Breast epithelium (tissue), 4 donors: ENCODE measurements at regions of chr2 and their contacts with region 1.

Region 1: GRCh38 chr2:50786345-50786744 is 245.6 kb downstream of the NRXN1 start:
- DNase-seq: no peak
- H3K4me3 ChIP-seq: no peak overlapping the region
- H3K27ac ChIP-seq: no peak overlapping the region
- H3K4me1 ChIP-seq: no peaks in the 10 kb centered on the region
- H3K27me3 ChIP-seq: no peaks in the 10 kb centered on the region
- CTCF ChIP-seq: no peak
- POLR2A ChIP-seq: no peak

Region 2: DNA sequence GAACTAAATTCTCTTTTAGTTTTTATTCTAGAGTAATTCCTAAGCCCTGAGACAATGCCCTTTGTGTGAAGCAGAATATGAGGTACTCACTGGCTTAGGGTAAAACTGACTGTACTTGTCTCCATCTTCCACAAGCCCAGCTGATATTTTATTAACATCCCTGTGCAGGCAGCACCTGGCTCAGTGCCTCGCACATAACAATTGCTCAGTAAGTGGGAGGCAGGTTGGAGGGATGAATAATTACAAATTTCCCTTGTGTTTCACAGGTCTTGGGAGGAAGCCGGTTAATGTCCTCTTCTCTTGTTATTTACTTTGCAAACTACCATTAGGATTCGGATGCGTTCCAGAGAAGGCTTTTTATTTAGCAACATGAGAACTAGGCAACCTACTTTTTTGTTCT is 1382.2 kb before region 1 on chr2:
- intact Hi-C with region 1: loop called (anchors 10 kb)
- DNase-seq: no peak
- H3K4me3 ChIP-seq: no peak overlapping the region
- H3K27ac ChIP-seq: no peak overlapping the region
- H3K4me1 ChIP-seq: no peaks in the 10 kb centered on the region
- H3K27me3 ChIP-seq: no peaks in the 10 kb centered on the region
- CTCF ChIP-seq: no peak
- POLR2A ChIP-seq: no peak

Region 3: DNA sequence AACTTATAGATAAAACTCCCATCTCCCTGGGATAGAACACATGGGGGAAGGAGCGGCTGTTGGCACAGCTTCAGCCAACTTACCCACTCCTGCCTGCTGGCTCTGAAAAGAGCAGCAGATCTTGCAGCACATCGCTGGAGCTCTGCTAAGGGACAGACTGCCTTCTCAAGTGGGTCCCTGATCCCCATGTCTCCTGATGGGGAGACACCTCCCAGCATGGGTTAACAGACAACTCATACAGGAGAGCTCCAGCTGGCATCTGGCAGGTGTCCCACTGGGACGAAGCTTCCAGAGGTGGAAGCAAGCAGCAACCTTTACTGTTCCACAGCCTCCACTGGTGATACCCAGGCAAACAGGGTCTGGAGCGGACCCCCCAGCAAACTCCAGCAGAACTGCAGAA is 427.8 kb before region 1 on chr2:
- intact Hi-C with region 1: no loop called
- DNase-seq: no peak
- H3K4me3 ChIP-seq: no peak overlapping the region
- H3K27ac ChIP-seq: no peak overlapping the region
- H3K4me1 ChIP-seq: no peaks in the 10 kb centered on the region
- H3K27me3 ChIP-seq: no peaks in the 10 kb centered on the region
- CTCF ChIP-seq: no peak
- POLR2A ChIP-seq: no peak